MCF 10A (cell line): ENCODE measurements at regions of chr12 and their contacts with region 1.

Region 1: DNA sequence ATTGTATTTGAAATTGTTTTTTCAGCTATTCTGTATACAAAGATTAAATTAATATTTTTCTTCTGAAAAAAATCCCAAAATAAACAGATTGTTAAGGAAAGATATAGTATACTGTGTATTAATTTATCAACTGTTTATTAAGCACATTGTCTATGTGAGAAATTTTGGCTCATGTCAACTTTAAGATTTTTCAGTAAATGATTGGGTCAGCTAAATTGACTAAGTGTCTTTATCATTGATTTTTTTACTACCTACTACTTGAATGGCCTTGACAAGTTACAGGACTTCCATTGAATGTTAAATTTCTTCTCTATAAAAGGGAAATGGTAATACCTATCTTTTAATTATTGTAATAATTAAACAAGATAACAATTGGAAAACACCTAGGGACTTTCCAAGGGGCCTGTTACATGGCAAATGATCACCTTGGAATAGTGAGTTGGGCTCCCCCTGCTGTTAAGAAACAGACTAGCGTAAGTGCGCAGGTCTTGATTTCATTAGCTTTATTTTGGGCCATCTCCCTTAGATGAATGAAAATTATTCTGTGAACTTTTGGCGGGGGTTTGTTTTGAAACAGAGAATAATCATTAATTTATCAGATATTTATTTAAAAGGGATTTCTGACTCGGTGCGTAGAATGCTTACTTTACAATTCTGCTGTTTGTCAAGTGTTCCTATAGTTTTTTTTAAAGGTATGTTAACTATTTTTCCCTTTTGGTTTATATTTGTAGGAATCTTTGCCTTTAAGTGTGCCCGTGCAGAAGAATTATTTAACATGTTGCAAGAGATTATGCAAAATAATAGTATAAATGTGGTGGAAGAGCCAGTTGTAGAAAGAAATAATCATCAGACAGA is 14.5 kb upstream of the CCT2 start:
- DNase-seq: peak; percentile 80
- H3K4me3 Mint-ChIP-seq: no peak overlapping the region
- H3K27ac Mint-ChIP-seq: peak overlapping the region; percentile 55
- H3K4me1 Mint-ChIP-seq: peaks cover 13% of the 10 kb centered on the region
- H3K27me3 Mint-ChIP-seq: no peaks in the 10 kb centered on the region
- CTCF ChIP-seq: peak; percentile 71

Region 2: GRCh38 chr12:69115951-69116350 is 454.8 kb before region 1 on chr12:
- CTCF ChIA-PET with region 1: no interaction called
- POLR2A ChIA-PET with region 1: no interaction called
- intact Hi-C with region 1: no loop called
- DNase-seq: no peak
- H3K4me3 Mint-ChIP-seq: no peak overlapping the region
- H3K27ac Mint-ChIP-seq: no peak overlapping the region
- H3K4me1 Mint-ChIP-seq: no peaks in the 10 kb centered on the region
- H3K27me3 Mint-ChIP-seq: no peaks in the 10 kb centered on the region
- CTCF ChIP-seq: no peak

Region 3: DNA sequence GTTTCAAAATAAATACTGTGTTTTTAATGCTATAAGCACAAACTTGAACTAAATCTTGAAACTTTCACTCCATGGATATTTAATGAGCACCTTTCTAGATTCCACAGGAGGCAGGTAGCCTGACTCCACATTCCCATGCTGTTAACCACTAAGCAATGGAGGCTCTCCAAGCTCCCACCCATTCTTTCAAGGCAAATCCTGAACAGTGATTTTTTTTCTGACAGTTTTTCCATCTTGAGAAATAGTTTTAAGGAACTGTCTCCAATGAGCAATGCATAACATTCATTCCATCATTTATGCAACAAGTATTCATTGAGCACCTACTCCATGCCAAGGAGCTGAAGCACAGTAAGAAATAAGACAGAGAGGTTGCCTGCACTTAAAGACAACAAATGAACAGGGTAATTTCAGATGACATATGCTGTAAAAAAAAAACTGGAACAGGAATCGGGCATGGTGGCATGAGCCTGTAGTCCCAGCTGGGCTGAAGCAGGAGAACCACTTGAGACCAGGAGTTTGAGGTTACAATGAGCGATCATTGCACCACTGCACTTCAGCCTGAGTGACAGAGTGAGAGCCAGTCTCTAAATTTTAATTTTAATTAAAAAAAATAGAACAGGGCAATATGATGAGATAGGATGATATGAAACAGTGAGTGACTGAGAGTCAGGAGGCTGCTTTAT is 433.7 kb before region 1 on chr12:
- CTCF ChIA-PET with region 1: no interaction called
- POLR2A ChIA-PET with region 1: no interaction called
- intact Hi-C with region 1: no loop called
- DNase-seq: no peak
- H3K4me3 Mint-ChIP-seq: no peak overlapping the region
- H3K27ac Mint-ChIP-seq: no peak overlapping the region
- H3K4me1 Mint-ChIP-seq: no peaks in the 10 kb centered on the region
- H3K27me3 Mint-ChIP-seq: no peaks in the 10 kb centered on the region
- CTCF ChIP-seq: no peak

Region 4: DNA sequence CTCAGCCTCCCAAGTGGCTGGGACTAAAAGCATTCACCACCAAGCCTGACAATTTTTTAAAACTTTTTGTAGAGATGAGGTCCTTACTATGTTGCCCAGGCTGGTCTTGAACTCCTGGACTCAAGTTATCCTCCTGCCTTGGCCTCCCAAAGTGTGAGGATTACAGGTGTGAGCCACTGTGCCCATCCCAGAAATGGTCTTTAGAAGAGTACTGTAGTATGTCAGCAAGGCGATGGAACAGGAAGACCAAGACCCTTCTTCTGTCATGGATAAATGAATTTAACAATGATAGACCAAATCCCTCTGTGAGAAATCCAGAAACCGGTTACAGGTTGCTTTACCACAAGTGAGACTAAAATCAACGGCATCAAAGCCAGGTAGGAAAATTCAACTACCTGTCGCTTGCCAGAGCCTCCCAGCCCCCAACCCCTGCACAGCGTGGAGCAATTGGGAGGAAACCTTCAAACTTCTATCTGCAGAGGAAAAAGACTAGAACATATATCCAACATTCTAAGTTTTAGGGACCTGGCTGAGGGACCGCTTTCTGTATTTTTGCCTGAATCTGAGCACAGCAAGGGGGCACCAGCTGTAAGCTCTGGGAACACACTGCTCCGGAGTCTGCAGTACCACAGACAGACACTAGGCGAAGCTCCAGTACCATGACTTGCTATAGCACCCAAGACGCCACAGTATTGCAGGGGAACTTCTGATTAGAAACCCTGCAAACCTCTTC is 280.1 kb before region 1 on chr12:
- CTCF ChIA-PET with region 1: interaction called, 5 read pairs
- POLR2A ChIA-PET with region 1: no interaction called
- intact Hi-C with region 1: loop called (anchors 2 kb)
- DNase-seq: peak; percentile 81
- H3K4me3 Mint-ChIP-seq: no peak overlapping the region
- H3K27ac Mint-ChIP-seq: no peak overlapping the region
- H3K4me1 Mint-ChIP-seq: peaks cover 6% of the 10 kb centered on the region
- H3K27me3 Mint-ChIP-seq: peaks cover 77% of the 10 kb centered on the region
- CTCF ChIP-seq: peak; percentile 88

Region 5: GRCh38 chr12:69388371-69388770 is 182.4 kb before region 1 on chr12:
- CTCF ChIA-PET with region 1: interaction called, 60 read pairs
- POLR2A ChIA-PET with region 1: interaction called, 4 read pairs
- intact Hi-C with region 1: loop called (anchors 1 kb)
- DNase-seq: peak; percentile 42
- H3K4me3 Mint-ChIP-seq: no peak overlapping the region
- H3K27ac Mint-ChIP-seq: no peak overlapping the region
- H3K4me1 Mint-ChIP-seq: peaks cover 6% of the 10 kb centered on the region
- H3K27me3 Mint-ChIP-seq: no peaks in the 10 kb centered on the region
- CTCF ChIP-seq: peak; percentile 53

Region 6: DNA sequence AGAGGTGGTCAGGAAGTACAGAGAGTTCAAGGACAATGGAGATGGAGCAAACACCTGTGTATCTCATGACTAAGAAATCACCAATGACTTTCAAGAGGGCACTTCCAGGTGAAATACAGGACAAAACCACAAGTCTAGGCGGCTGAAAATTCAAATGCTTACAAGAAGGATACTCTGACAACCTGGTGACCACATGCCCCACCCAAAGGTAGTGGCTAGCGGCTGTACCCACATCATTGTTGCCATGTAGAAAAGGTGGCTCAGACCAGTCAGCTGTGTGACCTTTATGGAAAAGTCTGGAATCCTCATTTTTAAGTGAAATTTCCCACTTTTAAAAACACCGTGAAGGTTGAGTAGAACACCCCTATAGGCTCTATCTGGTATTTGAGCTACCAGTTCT is 149.2 kb before region 1 on chr12:
- CTCF ChIA-PET with region 1: interaction called, 10 read pairs
- POLR2A ChIA-PET with region 1: interaction called, 3 read pairs
- intact Hi-C with region 1: no loop called
- DNase-seq: no peak
- H3K4me3 Mint-ChIP-seq: no peak overlapping the region
- H3K27ac Mint-ChIP-seq: no peak overlapping the region
- H3K4me1 Mint-ChIP-seq: no peaks in the 10 kb centered on the region
- H3K27me3 Mint-ChIP-seq: no peaks in the 10 kb centered on the region
- CTCF ChIP-seq: no peak

Region 7: GRCh38 chr12:69502345-69503081 is 68.3 kb before region 1 on chr12:
- CTCF ChIA-PET with region 1: interaction called, 5 read pairs
- POLR2A ChIA-PET with region 1: interaction called, 12 read pairs
- intact Hi-C with region 1: no loop called
- DNase-seq: peak; percentile 61
- H3K4me3 Mint-ChIP-seq: peak overlapping the region; percentile 43
- H3K27ac Mint-ChIP-seq: peak overlapping the region; percentile 22
- H3K4me1 Mint-ChIP-seq: peaks cover 44% of the 10 kb centered on the region
- H3K27me3 Mint-ChIP-seq: no peaks in the 10 kb centered on the region
- CTCF ChIP-seq: no peak

Region 8: GRCh38 chr12:69553627-69554248 is 17.0 kb before region 1 on chr12:
- CTCF ChIA-PET with region 1: interaction called, 16 read pairs
- POLR2A ChIA-PET with region 1: interaction called, 49 read pairs
- intact Hi-C with region 1: no loop called
- DNase-seq: peak; percentile 80
- H3K4me3 Mint-ChIP-seq: no peak overlapping the region
- H3K27ac Mint-ChIP-seq: peak overlapping the region; percentile 43
- H3K4me1 Mint-ChIP-seq: peaks cover 38% of the 10 kb centered on the region
- H3K27me3 Mint-ChIP-seq: no peaks in the 10 kb centered on the region
- CTCF ChIP-seq: no peak

Region 9: DNA sequence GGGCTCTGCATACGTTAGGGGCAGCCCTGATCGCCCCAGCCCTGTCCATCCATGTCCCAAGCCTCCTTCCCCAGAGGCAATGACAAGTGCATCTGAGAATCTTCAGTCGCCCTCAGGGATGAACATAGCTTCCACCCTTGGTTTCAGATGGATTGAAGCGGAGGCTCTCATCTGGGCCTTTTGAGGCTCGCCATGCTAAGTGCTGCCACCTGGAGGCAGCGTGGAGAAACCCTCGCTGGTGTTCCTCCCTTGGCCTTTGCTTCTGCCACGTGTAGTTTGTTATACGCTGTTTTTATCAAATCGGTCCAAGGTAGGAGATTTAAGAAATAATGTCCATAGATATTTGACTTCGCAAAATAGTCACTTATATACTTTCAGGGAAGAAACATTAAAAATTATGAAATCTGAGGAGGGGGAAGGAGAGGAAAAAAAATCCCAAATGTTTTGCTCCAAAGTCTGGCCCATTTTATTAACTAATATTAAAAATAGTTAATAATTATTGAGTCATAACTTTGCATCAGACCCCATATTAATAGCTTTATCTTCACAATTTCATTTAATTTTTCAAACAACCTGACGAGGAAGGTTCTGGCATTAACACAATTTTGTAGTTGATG is 68.7 kb after region 1 on chr12:
- CTCF ChIA-PET with region 1: no interaction called
- POLR2A ChIA-PET with region 1: no interaction called
- intact Hi-C with region 1: loop called (anchors 2 kb)
- DNase-seq: peak; percentile 72
- H3K4me3 Mint-ChIP-seq: no peak overlapping the region
- H3K27ac Mint-ChIP-seq: no peak overlapping the region
- H3K4me1 Mint-ChIP-seq: no peaks in the 10 kb centered on the region
- H3K27me3 Mint-ChIP-seq: no peaks in the 10 kb centered on the region
- CTCF ChIP-seq: peak; percentile 62